ENCODE measurements at regions of chr3 and their contacts with region 1.

Region 1: DNA sequence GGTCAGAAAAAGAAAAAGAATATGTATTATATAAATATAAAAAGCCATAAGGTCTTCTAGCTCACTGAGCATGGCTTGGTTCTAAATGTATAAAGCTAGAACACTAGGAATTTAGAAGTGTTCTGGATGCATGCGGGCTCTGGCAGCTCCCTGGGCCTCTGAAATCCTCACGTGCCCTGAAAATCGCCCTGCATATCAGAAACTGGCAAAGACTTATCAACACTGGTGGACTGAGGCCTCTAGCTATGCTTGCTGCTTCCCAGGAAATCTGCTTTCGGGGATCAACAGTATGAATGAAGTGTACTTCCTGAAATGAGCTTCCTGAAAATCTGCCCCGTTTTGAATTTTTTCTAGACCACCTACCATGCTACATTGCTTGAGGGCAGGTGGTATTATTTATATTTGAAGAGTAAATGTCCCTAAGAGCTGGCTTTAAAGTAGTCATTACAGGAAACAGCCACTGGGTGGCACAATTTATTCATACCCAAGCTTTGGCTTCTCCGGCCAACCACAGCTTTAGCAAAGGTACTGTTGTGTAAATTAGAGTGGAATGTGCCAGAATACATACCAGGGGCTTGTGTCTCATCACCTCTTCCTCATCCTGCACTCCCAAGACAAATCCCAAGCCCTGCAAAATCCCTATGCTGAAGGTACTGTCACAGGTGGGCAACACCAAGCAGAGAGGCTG is 17.7 kb downstream of the CRTAP start:
- DNase-seq: peak; percentile 76
- H3K4me3 ChIP-seq: no peak overlapping the region
- H3K27ac ChIP-seq: no peak overlapping the region
- H3K4me1 ChIP-seq: peaks cover 9% of the 10 kb centered on the region
- H3K27me3 ChIP-seq: no peaks in the 10 kb centered on the region
- CTCF ChIP-seq: peak; percentile 51 to 62
- POLR2A ChIP-seq: no peak

Region 2: GRCh38 chr3:33144433-33144832 is 13.0 kb after region 1 on chr3:
- CTCF ChIA-PET with region 1: interaction called, 17 read pairs
- POLR2A ChIA-PET with region 1: no interaction called
- dilution Hi-C with region 1: no loop called
- intact Hi-C with region 1: no loop called
- DNase-seq: no peak
- H3K4me3 ChIP-seq: no peak overlapping the region
- H3K27ac ChIP-seq: no peak overlapping the region
- H3K4me1 ChIP-seq: peaks cover 3% of the 10 kb centered on the region
- H3K27me3 ChIP-seq: no peaks in the 10 kb centered on the region
- CTCF ChIP-seq: peak; percentile 26 to 40
- POLR2A ChIP-seq: no peak

Region 3: GRCh38 chr3:33233884-33234283 is 102.4 kb after region 1 on chr3:
- CTCF ChIA-PET with region 1: interaction called, 11 read pairs
- POLR2A ChIA-PET with region 1: no interaction called
- dilution Hi-C with region 1: no loop called
- intact Hi-C with region 1: no loop called
- DNase-seq: no peak
- H3K4me3 ChIP-seq: no peak overlapping the region
- H3K27ac ChIP-seq: no peak overlapping the region
- H3K4me1 ChIP-seq: no peaks in the 10 kb centered on the region
- H3K27me3 ChIP-seq: peaks cover 21 to 25% of the 10 kb centered on the region in 2 experiments
- CTCF ChIP-seq: no peak
- POLR2A ChIP-seq: no peak

Region 4: DNA sequence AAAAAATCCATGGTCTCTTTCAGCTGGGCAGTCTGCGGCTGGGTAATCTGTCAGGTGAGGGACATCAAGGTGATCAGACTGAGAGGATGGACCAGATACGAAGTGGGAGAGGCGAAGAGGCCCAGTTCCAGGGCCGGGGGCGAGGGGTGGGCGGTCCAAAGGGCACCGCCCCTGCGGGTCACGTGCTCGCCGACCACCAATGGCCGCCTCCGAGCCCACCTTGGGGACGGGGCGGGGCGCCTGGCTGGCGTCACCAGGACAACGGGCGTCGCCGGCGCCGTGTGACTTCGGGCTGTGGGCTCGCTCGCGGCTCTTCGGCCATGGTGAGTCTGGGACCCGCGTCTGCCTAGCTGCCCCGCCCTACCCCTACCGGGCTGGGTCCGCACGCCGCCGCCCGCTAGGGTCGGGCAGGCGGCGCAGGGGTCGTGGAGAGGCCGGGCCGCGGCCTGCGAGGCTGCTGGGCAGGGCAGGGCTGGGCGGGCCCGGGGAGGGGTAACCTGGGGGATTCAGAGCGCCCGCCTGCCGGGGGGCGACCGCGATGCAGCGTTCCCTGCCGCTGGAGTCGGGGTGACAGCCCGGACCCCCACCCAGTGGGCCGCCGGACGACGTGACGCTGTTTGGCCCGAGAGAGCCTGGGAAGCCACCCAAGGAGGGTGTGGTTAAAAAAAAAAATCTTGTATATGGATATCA is 145.9 kb after region 1 on chr3 and contains the start of gene FBXL2:
- CTCF ChIA-PET with region 1: interaction called, 18 read pairs
- POLR2A ChIA-PET with region 1: no interaction called
- dilution Hi-C with region 1: no loop called
- intact Hi-C with region 1: no loop called
- DNase-seq: peak; percentile 73
- H3K4me3 ChIP-seq: peak within 1 kb of the TSS; percentile 66 to 93 (median 81)
- H3K27ac ChIP-seq: peak within 1 kb of the TSS; percentile 44
- H3K4me1 ChIP-seq: peaks cover 11% of the 10 kb centered on the region
- H3K27me3 ChIP-seq: no peaks in the 10 kb centered on the region
- CTCF ChIP-seq: no peak
- POLR2A ChIP-seq: peak; percentile 68
- total RNA-seq, gene FBXL2: 21.7 and 26.9 TPM in 2 replicates

Region 5: GRCh38 chr3:33360136-33360825 is 228.8 kb after region 1 on chr3:
- CTCF ChIA-PET with region 1: interaction called, 9 read pairs
- POLR2A ChIA-PET with region 1: no interaction called
- dilution Hi-C with region 1: loop called (anchors 10 kb)
- intact Hi-C with region 1: no loop called
- DNase-seq: peak; percentile 63
- H3K4me3 ChIP-seq: no peak overlapping the region
- H3K27ac ChIP-seq: peak overlapping the region; percentile 75
- H3K4me1 ChIP-seq: peaks cover 18% of the 10 kb centered on the region
- H3K27me3 ChIP-seq: no peaks in the 10 kb centered on the region
- CTCF ChIP-seq: no peak
- POLR2A ChIP-seq: no peak